ENCODE measurements at regions of chr3 and their contacts with region 1.

Region 1: GRCh38 chr3:65963787-65964677 is 74.7 kb downstream of the MAGI1 start:
- DNase-seq: peak; percentile 77
- ATAC-seq: peak; percentile 94
- H3K4me3 Mint-ChIP-seq: no peak overlapping the region
- H3K27ac Mint-ChIP-seq: peak overlapping the region; percentile 77
- H3K4me1 Mint-ChIP-seq: peaks cover 14% of the 10 kb centered on the region
- H3K27me3 Mint-ChIP-seq: peaks cover 8% of the 10 kb centered on the region

Region 2: DNA sequence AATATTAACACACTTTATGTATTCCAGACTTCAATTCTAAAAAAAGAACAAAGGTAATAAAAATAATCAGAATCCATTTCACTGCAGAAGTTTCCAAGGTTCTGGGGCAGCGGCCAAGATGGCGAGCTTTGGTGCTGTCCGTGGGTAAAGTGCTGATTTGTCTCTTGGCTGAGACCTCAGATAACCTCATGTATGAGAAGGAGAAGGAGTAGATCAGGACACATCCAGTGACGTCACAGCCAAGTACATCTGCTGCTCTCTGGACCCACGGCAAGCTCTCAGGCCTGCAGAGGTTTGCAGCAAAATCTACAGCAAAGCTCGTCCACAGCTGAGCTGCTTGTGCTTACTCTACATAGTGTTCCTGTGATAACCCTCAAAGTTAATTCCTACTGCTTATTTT is 91.0 kb before region 1 on chr3:
- CTCF ChIA-PET with region 1: no interaction called
- POLR2A ChIA-PET with region 1: no interaction called
- intact Hi-C with region 1: no loop called
- DNase-seq: no peak
- ATAC-seq: no peak
- H3K4me3 Mint-ChIP-seq: no peak overlapping the region
- H3K27ac Mint-ChIP-seq: no peak overlapping the region
- H3K4me1 Mint-ChIP-seq: no peaks in the 10 kb centered on the region
- H3K27me3 Mint-ChIP-seq: peaks cover 3% of the 10 kb centered on the region

Region 3: GRCh38 chr3:65902304-65902793 is 61.7 kb before region 1 on chr3:
- CTCF ChIA-PET with region 1: no interaction called
- POLR2A ChIA-PET with region 1: no interaction called
- intact Hi-C with region 1: no loop called
- DNase-seq: no peak
- ATAC-seq: no peak
- H3K4me3 Mint-ChIP-seq: no peak overlapping the region
- H3K27ac Mint-ChIP-seq: no peak overlapping the region
- H3K4me1 Mint-ChIP-seq: no peaks in the 10 kb centered on the region
- H3K27me3 Mint-ChIP-seq: peaks cover 4% of the 10 kb centered on the region

Region 4: DNA sequence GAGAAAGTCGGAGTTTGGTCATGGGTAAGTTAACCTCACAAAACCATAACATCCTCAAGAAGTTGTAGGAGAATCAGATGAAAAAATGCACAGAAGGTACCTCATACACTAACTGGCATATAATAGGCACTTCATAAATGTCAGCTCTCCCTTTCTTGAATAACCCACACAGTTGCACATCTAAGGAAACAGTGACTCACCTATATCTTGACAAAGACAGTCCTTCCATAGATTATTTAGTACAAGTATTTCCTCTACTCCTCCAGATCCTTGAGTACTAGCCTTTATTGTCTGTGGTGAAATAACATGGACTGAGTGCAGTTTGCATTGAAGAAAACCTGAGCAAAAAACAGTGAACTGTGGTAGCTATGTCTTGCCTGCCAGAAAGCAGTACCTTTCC is 28.1 kb after region 1 on chr3:
- CTCF ChIA-PET with region 1: no interaction called
- POLR2A ChIA-PET with region 1: no interaction called
- intact Hi-C with region 1: loop called in 1 of 2 experiments (anchors 2 kb)
- DNase-seq: no peak
- ATAC-seq: no peak
- H3K4me3 Mint-ChIP-seq: no peak overlapping the region
- H3K27ac Mint-ChIP-seq: no peak overlapping the region
- H3K4me1 Mint-ChIP-seq: no peaks in the 10 kb centered on the region
- H3K27me3 Mint-ChIP-seq: peaks cover 13% of the 10 kb centered on the region

Region 5: GRCh38 chr3:66033241-66034138 is 69.5 kb after region 1 on chr3:
- CTCF ChIA-PET with region 1: no interaction called
- POLR2A ChIA-PET with region 1: no interaction called
- intact Hi-C with region 1: loop called (anchors 1 kb)
- DNase-seq: no peak
- ATAC-seq: peak; percentile 60
- H3K4me3 Mint-ChIP-seq: no peak overlapping the region
- H3K27ac Mint-ChIP-seq: peak overlapping the region; percentile 27
- H3K4me1 Mint-ChIP-seq: peaks cover 15% of the 10 kb centered on the region
- H3K27me3 Mint-ChIP-seq: peaks cover 44% of the 10 kb centered on the region

Region 6: GRCh38 chr3:66220602-66221377 is 256.8 kb after region 1 on chr3 and contains the start of gene SLC25A26:
- CTCF ChIA-PET with region 1: no interaction called
- POLR2A ChIA-PET with region 1: no interaction called
- intact Hi-C with region 1: loop called in 1 of 2 experiments (anchors 1 kb)
- DNase-seq: peak; percentile 99
- ATAC-seq: peak; percentile 96
- H3K4me3 Mint-ChIP-seq: peak within 1 kb of the TSS; percentile 86
- H3K27ac Mint-ChIP-seq: peak within 1 kb of the TSS; percentile 92
- H3K4me1 Mint-ChIP-seq: peaks cover 48% of the 10 kb centered on the region
- H3K27me3 Mint-ChIP-seq: no peaks in the 10 kb centered on the region
- total RNA-seq, gene SLC25A26: 14.2 to 22.7 TPM

Measured in activated CD4-positive, alpha-beta T cell treated with anti-CD3 and anti-CD28 coated beads for 36 hours (primary cell).